CD4-positive, alpha-beta memory T cell (primary cell): ENCODE measurements at regions of chr11 and their contacts with region 1.

Region 1: GRCh38 chr11:72483412-72484186 is 49.3 kb upstream of the CLPB start:
- DNase-seq: peak in 1 of 5 donors; percentile 10
- H3K4me3 ChIP-seq: no peak overlapping the region
- H3K4me3 Mint-ChIP-seq: no peak overlapping the region
- H3K27ac ChIP-seq: no peak overlapping the region
- H3K27ac Mint-ChIP-seq: peak overlapping the region in 3 of 7 donors; percentile 8 to 73 (median 62)
- H3K4me1 ChIP-seq: peaks cover 5% of the 10 kb centered on the region
- H3K4me1 Mint-ChIP-seq: peaks cover 8 to 14% (median 11%) of the 10 kb centered on the region in 4 donors
- H3K27me3 ChIP-seq: no peaks in the 10 kb centered on the region
- H3K27me3 Mint-ChIP-seq: peaks cover 2 to 3% of the 10 kb centered on the region in 2 donors

Region 2: GRCh38 chr11:72519220-72519881 is 35.8 kb after region 1 on chr11:
- CTCF ChIA-PET with region 1: interaction called, 5 read pairs
- POLR2A ChIA-PET with region 1: no interaction called
- intact Hi-C with region 1: loop called (anchors 5 kb)
- DNase-seq: peak in 4 of 5 donors; percentile 11 to 38 (median 26)
- H3K4me3 ChIP-seq: peak overlapping the region; percentile 7 to 40
- H3K4me3 Mint-ChIP-seq: peak overlapping the region; percentile 82 to 94 (median 87)
- H3K27ac ChIP-seq: peak overlapping the region; percentile 44
- H3K27ac Mint-ChIP-seq: peak overlapping the region; percentile 84 to 94 (median 91)
- H3K4me1 ChIP-seq: peaks cover 33% of the 10 kb centered on the region
- H3K4me1 Mint-ChIP-seq: peaks cover 32 to 42% (median 38%) of the 10 kb centered on the region in 4 donors
- H3K27me3 ChIP-seq: no peaks in the 10 kb centered on the region
- H3K27me3 Mint-ChIP-seq: no peaks in the 10 kb centered on the region

Region 3: GRCh38 chr11:72553706-72554105 is 70.1 kb after region 1 on chr11:
- CTCF ChIA-PET with region 1: interaction called, 15 read pairs
- POLR2A ChIA-PET with region 1: no interaction called
- intact Hi-C with region 1: loop called (anchors 1 kb)
- DNase-seq: peak in 4 of 5 donors; percentile 17 to 32 (median 24)
- H3K4me3 ChIP-seq: no peak overlapping the region
- H3K4me3 Mint-ChIP-seq: no peak overlapping the region
- H3K27ac ChIP-seq: no peak overlapping the region
- H3K27ac Mint-ChIP-seq: no peak overlapping the region
- H3K4me1 ChIP-seq: no peaks in the 10 kb centered on the region
- H3K4me1 Mint-ChIP-seq: peaks cover 6 to 16% (median 12%) of the 10 kb centered on the region in 4 donors
- H3K27me3 ChIP-seq: no peaks in the 10 kb centered on the region
- H3K27me3 Mint-ChIP-seq: peaks cover 5 to 8% of the 10 kb centered on the region in 2 donors

Region 4: GRCh38 chr11:72573072-72573854 is 89.7 kb after region 1 on chr11:
- CTCF ChIA-PET with region 1: interaction called, 11 read pairs
- POLR2A ChIA-PET with region 1: no interaction called
- intact Hi-C with region 1: loop called (anchors 1 kb)
- DNase-seq: peak in 3 of 5 donors; percentile 16 to 25 (median 25)
- H3K4me3 ChIP-seq: no peak overlapping the region
- H3K4me3 Mint-ChIP-seq: no peak overlapping the region
- H3K27ac ChIP-seq: no peak overlapping the region
- H3K27ac Mint-ChIP-seq: peak overlapping the region in 1 of 7 donors; percentile 15
- H3K4me1 ChIP-seq: no peaks in the 10 kb centered on the region
- H3K4me1 Mint-ChIP-seq: peaks cover 0 to 11% (median 1%) of the 10 kb centered on the region in 4 donors
- H3K27me3 ChIP-seq: no peaks in the 10 kb centered on the region
- H3K27me3 Mint-ChIP-seq: peaks cover 6 to 10% of the 10 kb centered on the region in 2 donors

Region 5: GRCh38 chr11:72642884-72643511 is 159.4 kb after region 1 on chr11:
- CTCF ChIA-PET with region 1: interaction called, 6 read pairs
- POLR2A ChIA-PET with region 1: no interaction called
- intact Hi-C with region 1: loop called (anchors 1 kb)
- DNase-seq: peak in 4 of 5 donors; percentile 66 to 75 (median 67)
- H3K4me3 ChIP-seq: peak overlapping the region in 1 of 2 donors; percentile 47
- H3K4me3 Mint-ChIP-seq: peak overlapping the region in 5 of 8 donors; percentile 10 to 76 (median 47)
- H3K27ac ChIP-seq: no peak overlapping the region
- H3K27ac Mint-ChIP-seq: no peak overlapping the region
- H3K4me1 ChIP-seq: no peaks in the 10 kb centered on the region
- H3K4me1 Mint-ChIP-seq: peaks cover 0 to 9% (median 0%) of the 10 kb centered on the region in 4 donors
- H3K27me3 ChIP-seq: peaks cover 11% of the 10 kb centered on the region
- H3K27me3 Mint-ChIP-seq: peaks cover 3% of the 10 kb centered on the region in 2 donors